Motor neuron (in vitro differentiated cells): ENCODE measurements at regions of chr7 and their contacts with region 1.

Region 1: DNA sequence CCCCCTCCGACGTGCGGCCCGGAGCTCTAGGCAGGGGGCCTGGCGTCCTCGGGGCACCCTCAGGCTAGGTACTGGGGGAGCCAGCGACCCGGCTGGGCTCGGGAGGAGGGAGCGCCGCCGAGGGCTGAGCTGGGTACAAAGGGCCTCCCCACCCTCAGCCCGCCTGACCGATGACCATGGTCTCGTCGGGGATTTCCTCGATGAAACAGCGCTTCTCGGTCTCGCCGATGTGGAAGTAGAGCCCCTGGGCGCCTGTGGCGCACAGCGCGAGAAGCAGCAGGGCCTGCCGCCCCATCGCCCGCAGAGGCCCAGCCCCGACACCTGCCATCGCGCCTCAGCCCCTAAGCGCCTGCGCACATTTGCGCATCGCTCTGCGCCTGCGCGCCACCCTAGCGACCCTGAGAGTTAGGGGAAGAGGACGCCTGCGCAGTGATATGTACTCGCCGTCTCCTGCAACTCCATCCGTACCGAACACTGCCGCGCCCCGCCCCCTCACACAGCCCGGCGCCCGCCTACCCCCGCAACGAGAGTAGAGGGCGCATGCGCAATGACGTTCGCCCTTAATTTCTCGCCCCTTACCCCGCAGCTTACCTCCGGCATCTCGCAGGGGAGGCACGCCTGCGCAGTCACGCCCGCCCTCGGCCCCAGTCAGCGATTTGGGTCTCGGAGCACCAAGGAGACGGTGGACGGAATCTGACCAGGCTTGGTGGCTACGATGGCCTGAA is at the start of gene TMED4:
- ATAC-seq: peak; percentile 82 to 96 (median 94)
- H3K4me3 ChIP-seq: peak within 1 kb of the TSS; percentile 53 to 87 (median 74)
- H3K27ac ChIP-seq: peak within 1 kb of the TSS; percentile 87 to 92
- H3K4me1 ChIP-seq: peaks cover 12 to 16% of the 10 kb centered on the region in 2 donors
- total RNA-seq, gene TMED4: 54.9 to 97.9 (median 66.4) TPM

Region 2: GRCh38 chr7:44131173-44132029 is 450.6 kb before region 1 on chr7:
- in situ Hi-C with region 1: no loop called
- ATAC-seq: peak; percentile 30 to 82 (median 60)
- H3K4me3 ChIP-seq: no peak overlapping the region
- H3K27ac ChIP-seq: no peak overlapping the region
- H3K4me1 ChIP-seq: no peaks in the 10 kb centered on the region

Region 3: DNA sequence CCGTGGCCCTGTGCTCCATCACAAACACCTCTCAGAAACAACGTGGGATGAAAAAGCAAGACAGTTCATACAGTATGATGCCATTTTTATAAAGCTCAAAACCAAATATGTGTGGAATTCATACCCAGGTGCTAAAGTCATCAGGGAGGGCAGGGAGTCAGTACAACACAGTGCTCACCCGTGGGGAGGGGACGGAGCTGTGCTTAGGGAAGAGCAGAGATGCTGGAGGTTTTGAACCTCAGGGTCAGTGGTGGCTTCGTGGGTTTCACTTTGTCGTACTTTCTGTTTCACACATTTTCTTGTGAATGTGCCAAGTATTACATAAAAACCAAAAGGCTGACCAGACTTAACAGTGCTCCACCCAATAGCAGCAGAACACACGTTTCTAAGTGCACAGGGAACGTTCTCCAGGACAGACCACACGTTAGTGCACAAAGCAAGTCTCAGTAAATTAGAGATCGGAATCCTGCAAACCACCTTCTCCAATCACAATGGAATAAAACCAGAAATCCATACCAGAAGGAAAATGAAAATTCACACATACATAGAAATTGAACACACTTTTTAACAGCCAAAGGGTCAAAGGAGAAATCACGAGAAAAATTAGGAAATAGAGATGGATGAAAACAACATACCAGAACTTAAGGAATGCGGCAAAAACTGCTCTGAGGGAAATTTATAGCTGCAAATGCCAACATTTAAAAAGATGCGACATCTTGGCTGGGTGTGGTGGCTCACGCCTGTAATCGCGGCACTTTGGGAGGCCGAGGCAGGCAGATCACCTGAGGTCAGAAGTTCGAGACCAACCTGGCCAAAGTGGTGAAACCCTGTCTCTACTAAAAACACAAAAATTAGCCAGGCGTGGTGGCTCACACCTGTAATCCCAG is 188.0 kb after region 1 on chr7:
- in situ Hi-C with region 1: loop called in 1 of 9 experiments (anchors 25 kb)
- ATAC-seq: peak in 2 of 8 experiments; percentile 13 to 37
- H3K4me3 ChIP-seq: no peak overlapping the region
- H3K27ac ChIP-seq: no peak overlapping the region
- H3K4me1 ChIP-seq: no peaks in the 10 kb centered on the region

Region 4: DNA sequence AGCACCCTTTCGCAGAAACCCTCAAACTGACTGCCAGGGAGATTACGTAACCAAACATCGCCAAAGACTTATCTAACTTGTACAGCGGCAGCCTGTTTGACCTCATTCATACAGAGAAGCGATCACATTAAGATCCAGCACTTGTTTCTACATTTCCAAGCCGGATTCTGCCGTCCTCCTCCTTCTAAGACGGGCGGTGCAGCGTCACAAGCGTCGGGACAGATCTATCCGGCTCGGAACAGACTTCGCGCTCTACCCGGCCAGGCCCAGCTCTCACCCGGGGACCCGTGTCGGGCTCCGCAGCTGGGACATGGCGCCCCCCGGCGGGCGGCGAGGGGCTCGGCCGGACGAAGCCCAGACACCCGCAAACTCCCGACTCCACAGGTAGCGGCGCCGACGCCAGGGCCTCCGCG is 265.5 kb after region 1 on chr7:
- in situ Hi-C with region 1: loop called in 3 of 9 experiments (anchors 25 kb)
- ATAC-seq: peak; percentile 76 to 82 (median 80)
- H3K4me3 ChIP-seq: peak overlapping the region; percentile 71 to 96 (median 72)
- H3K27ac ChIP-seq: peak overlapping the region; percentile 73 to 93
- H3K4me1 ChIP-seq: peaks cover 8 to 19% of the 10 kb centered on the region in 2 donors

Region 5: GRCh38 chr7:45111298-45112223 is 529.5 kb after region 1 on chr7 and contains the start of gene TBRG4:
- in situ Hi-C with region 1: loop called in 1 of 9 experiments (anchors 25 kb)
- ATAC-seq: peak; percentile 88 to 97 (median 96)
- H3K4me3 ChIP-seq: peak within 1 kb of the TSS; percentile 61 to 78 (median 73)
- H3K27ac ChIP-seq: peak within 1 kb of the TSS; percentile 92 to 97
- H3K4me1 ChIP-seq: peaks cover 12 to 15% of the 10 kb centered on the region in 2 donors
- total RNA-seq, gene TBRG4: 27.4 to 104 (median 44.1) TPM

Region 6: DNA sequence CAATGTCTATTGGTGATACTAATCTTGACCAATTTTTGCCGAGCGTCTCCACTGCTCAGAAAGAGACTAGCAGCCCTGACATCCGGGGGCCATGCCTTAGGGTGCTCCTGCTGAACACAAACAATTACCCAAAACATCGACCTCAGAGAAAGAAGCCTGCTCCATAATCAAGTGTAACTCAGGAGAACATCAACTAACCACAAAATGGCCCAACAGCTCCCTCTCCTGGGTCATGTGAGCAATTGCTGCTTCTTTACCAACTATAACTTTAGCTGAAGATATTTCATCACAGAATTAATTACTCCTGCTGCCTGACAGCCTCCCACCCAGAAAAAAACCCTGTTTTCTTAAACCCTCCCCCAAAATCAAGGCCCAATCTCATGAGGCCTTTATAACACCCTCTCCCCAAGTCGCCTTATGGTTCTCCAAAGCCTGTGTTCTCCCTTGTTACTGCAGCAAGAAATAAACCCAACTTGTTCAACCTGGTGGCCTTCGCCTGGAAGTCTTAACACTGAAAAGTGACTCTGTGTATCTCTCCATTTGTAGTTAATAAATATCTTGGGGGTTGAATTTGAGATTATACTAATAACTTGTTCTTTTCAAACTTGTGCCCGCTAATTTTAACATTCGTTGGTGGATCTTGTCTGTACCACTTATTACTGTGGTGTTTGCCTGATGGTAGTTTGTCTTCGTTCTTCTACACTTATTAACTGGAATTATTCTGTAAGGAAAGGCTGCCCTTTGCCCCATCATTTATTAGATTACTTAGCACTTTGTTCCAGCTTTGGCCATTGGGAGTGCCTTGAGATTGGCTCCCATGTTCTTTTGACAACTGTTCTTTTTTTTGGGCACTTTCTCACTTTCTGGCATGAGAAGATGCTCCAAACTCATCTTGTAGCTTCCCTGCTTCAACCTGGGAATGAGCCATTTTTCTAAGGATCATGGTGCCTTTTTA is 554.3 kb after region 1 on chr7:
- in situ Hi-C with region 1: loop called in 3 of 9 experiments (anchors 25 kb)
- ATAC-seq: peak; percentile 59 to 92 (median 82)
- H3K4me3 ChIP-seq: no peak overlapping the region
- H3K27ac ChIP-seq: no peak overlapping the region
- H3K4me1 ChIP-seq: no peaks in the 10 kb centered on the region